WTC11 (cell line): ENCODE measurements at regions of chr16 and their contacts with region 1.

Region 1: GRCh38 chr16:23435500-23435899 is 17.5 kb downstream of the COG7 start:
- DNase-seq: peak; percentile 83
- ATAC-seq: peak; percentile 94
- H3K4me3 Mint-ChIP-seq: no peak overlapping the region
- H3K27ac Mint-ChIP-seq: no peak overlapping the region
- H3K4me1 Mint-ChIP-seq: no peaks in the 10 kb centered on the region
- H3K27me3 Mint-ChIP-seq: no peaks in the 10 kb centered on the region
- CTCF ChIP-seq: peak; percentile 84

Region 2: GRCh38 chr16:23182460-23183309 is 252.8 kb before region 1 on chr16 and contains the start of gene SCNN1G:
- CTCF ChIA-PET with region 1: interaction called, 54 read pairs
- POLR2A ChIA-PET with region 1: no interaction called
- DNase-seq: peak; percentile 94
- ATAC-seq: peak; percentile 90
- H3K4me3 Mint-ChIP-seq: peak within 1 kb of the TSS; percentile 75
- H3K27ac Mint-ChIP-seq: no peak within 1 kb of the TSS
- H3K4me1 Mint-ChIP-seq: peaks cover 16% of the 10 kb centered on the region
- H3K27me3 Mint-ChIP-seq: peaks cover 47% of the 10 kb centered on the region
- CTCF ChIP-seq: peak; percentile 80
- total RNA-seq, gene SCNN1G: 0.78 to 1.3 TPM (median 0.80 TPM) in 3 replicates

Region 3: GRCh38 chr16:23302045-23302956 is 133.2 kb before region 1 on chr16 and contains the start of gene SCNN1B:
- CTCF ChIA-PET with region 1: interaction called, 32 read pairs
- POLR2A ChIA-PET with region 1: no interaction called
- DNase-seq: peak; percentile 58
- ATAC-seq: peak; percentile 62
- H3K4me3 Mint-ChIP-seq: peak within 1 kb of the TSS; percentile 90
- H3K27ac Mint-ChIP-seq: no peak within 1 kb of the TSS; the same call in 1 of the 2 replicates
- H3K4me1 Mint-ChIP-seq: peaks cover 12% of the 10 kb centered on the region
- H3K27me3 Mint-ChIP-seq: peaks cover 46% of the 10 kb centered on the region
- CTCF ChIP-seq: no peak
- total RNA-seq, gene SCNN1B: 3.4 to 4.8 TPM (median 3.6 TPM) in 3 replicates

Region 4: GRCh38 chr16:23348579-23349469 is 86.7 kb before region 1 on chr16:
- CTCF ChIA-PET with region 1: interaction called, 14 read pairs
- POLR2A ChIA-PET with region 1: no interaction called
- DNase-seq: peak; percentile 71
- ATAC-seq: peak; percentile 91
- H3K4me3 Mint-ChIP-seq: no peak overlapping the region
- H3K27ac Mint-ChIP-seq: no peak overlapping the region
- H3K4me1 Mint-ChIP-seq: peaks cover 10% of the 10 kb centered on the region
- H3K27me3 Mint-ChIP-seq: no peaks in the 10 kb centered on the region; the same call in 1 of the 2 replicates
- CTCF ChIP-seq: peak; percentile 19; the same call in 1 of the 2 replicates

Region 5: DNA sequence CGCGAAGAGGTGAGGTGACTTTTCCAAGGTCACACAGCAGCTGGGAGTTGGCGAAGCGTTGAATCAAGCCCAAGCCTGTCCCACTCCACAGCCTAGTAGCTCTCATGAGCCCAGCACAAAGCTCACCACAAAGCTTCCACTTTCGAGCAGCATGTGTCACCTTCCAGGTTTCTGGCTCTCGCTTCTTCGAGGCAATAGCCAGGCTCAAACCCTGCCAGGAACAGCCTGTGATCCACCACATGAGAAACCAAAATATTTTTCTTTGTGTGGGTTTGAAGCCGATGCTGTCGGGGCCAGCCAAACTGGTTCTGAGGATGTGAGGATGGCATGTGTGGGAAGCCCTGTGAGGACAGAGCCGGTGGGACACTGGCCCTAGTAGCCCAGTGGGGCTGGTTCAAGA is 50.6 kb before region 1 on chr16:
- CTCF ChIA-PET with region 1: interaction called, 16 read pairs
- POLR2A ChIA-PET with region 1: no interaction called
- DNase-seq: no peak
- ATAC-seq: no peak
- H3K4me3 Mint-ChIP-seq: no peak overlapping the region
- H3K27ac Mint-ChIP-seq: no peak overlapping the region
- H3K4me1 Mint-ChIP-seq: no peaks in the 10 kb centered on the region
- H3K27me3 Mint-ChIP-seq: no peaks in the 10 kb centered on the region
- CTCF ChIP-seq: no peak

Region 6: DNA sequence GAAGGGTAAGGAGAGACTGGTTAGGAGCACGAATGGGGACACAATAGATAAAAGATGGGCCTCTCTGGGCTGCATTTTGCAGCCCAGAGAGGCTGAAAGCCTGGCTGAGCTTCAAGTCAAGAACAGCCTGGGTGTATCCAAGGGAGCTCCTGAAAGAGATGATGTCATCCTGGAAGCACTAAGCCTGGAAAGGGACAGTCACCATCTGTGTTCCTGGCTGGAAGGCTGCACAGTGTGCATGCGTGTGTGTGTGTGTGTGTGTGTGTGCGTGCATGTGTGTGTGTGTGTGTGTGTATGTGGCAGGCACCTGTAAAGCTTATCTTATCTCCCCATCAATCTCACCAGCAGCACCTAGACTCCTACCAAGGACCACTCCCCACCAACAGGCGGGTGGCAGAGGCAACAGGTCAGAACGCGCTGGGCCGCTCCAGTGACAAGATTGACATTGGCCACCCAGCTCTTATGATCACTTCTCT is 26.6 kb before region 1 on chr16:
- CTCF ChIA-PET with region 1: interaction called, 29 read pairs
- POLR2A ChIA-PET with region 1: no interaction called
- DNase-seq: no peak
- ATAC-seq: peak; percentile 67
- H3K4me3 Mint-ChIP-seq: no peak overlapping the region
- H3K27ac Mint-ChIP-seq: peak overlapping the region; percentile 80
- H3K4me1 Mint-ChIP-seq: peaks cover 19% of the 10 kb centered on the region
- H3K27me3 Mint-ChIP-seq: no peaks in the 10 kb centered on the region
- CTCF ChIP-seq: no peak

Region 7: DNA sequence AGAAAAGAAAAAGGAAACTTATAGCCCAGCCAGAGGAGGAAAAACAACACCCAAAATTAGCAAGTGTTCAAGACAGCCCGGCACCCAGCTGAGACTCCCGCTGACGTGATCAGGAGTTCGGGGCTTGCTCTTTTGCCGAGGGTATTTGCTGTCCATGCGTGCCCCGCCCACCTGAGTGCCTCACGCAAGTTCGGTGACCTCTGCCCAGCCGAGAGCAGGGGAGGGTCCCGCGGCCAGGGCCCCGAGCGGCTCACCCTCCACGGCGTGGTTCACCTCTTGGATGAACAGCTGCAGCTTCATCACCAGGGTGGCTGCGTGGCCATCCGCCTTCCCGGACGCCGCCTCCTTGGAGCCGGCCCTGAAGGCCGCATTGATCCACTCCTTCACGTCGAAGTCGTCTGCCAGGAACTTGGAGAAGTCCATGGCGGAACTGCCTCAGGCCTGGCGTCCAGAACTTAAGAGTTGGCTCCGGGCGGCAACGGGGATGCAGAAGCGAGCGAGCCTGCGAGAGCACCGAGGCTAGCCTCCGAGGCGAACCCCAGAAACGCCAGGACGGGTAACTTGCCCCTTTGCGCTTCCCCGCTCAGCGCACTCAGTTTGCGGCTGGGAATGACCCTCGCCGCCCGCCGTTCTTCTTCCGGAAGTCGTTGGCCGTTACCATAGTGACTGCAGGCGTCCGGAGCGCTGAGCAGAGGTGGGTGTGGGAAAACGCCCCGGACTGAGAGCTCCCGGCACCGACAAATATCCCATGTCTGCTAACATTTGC is 17.3 kb after region 1 on chr16 and contains the start of gene COG7:
- CTCF ChIA-PET with region 1: interaction called, 20 read pairs
- POLR2A ChIA-PET with region 1: no interaction called
- DNase-seq: peak; percentile 88
- ATAC-seq: peak; percentile 89
- H3K4me3 Mint-ChIP-seq: peak within 1 kb of the TSS; percentile 86
- H3K27ac Mint-ChIP-seq: peak within 1 kb of the TSS; percentile 88
- H3K4me1 Mint-ChIP-seq: peaks cover 6% of the 10 kb centered on the region
- H3K27me3 Mint-ChIP-seq: no peaks in the 10 kb centered on the region
- CTCF ChIP-seq: no peak
- total RNA-seq, gene COG7: 21.6 to 22.6 TPM (median 21.9 TPM) in 3 replicates

Region 8: GRCh38 chr16:23826528-23827045 is 391.1 kb after region 1 on chr16:
- CTCF ChIA-PET with region 1: no interaction called
- POLR2A ChIA-PET with region 1: no interaction called
- DNase-seq: no peak
- ATAC-seq: no peak
- H3K4me3 Mint-ChIP-seq: no peak overlapping the region
- H3K27ac Mint-ChIP-seq: no peak overlapping the region
- H3K4me1 Mint-ChIP-seq: no peaks in the 10 kb centered on the region
- H3K27me3 Mint-ChIP-seq: peaks cover 43% of the 10 kb centered on the region
- CTCF ChIP-seq: no peak